ENCODE measurements at regions of chr15 and their contacts with region 1.

Region 1: DNA sequence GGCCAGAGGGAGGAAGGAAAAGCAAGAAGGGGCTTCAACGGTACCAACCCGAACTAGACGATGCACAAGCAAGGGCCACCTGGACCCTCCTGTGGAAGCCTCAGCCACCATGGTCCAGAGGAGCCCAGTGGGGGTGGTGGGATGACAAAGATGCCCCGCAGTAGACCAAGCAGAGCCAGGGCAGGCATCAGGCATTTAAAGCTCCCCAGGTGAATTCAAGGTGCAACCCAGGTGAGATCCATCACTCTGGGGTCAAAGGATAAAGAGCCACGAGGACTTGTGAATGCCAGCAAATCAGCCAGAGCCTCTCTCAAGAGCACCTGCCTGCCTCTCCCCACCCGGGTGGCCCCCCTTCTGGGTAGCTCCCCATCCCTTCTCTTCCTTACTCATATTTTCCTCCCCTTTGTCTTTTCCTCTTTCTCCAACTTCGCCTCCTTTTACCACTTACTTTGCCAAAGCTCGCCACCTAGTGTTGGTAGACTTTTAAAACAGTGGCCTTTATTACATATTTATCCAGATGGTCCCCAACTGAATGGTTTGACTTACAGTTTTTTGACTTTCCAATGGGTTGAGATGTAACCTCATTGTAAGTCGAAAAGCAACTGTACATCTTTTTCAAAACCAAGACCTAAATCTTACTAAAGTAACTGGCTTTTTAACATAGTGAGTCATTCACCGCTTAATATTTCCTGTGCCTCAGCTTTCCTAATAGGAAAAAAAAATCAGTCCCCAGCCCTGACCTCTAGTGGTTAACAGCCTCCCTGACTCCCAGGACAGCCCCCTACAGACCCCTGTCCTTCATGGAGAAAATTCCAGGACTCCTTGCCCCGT is 18.8 kb downstream of the PLA2G4F start:
- DNase-seq: peak; percentile 76
- H3K4me3 Mint-ChIP-seq: no peak overlapping the region
- H3K27ac Mint-ChIP-seq: no peak overlapping the region
- H3K4me1 Mint-ChIP-seq: peaks cover 5% of the 10 kb centered on the region
- H3K27me3 Mint-ChIP-seq: peaks cover 20% of the 10 kb centered on the region
- CTCF ChIP-seq: peak; percentile 66

Region 2: DNA sequence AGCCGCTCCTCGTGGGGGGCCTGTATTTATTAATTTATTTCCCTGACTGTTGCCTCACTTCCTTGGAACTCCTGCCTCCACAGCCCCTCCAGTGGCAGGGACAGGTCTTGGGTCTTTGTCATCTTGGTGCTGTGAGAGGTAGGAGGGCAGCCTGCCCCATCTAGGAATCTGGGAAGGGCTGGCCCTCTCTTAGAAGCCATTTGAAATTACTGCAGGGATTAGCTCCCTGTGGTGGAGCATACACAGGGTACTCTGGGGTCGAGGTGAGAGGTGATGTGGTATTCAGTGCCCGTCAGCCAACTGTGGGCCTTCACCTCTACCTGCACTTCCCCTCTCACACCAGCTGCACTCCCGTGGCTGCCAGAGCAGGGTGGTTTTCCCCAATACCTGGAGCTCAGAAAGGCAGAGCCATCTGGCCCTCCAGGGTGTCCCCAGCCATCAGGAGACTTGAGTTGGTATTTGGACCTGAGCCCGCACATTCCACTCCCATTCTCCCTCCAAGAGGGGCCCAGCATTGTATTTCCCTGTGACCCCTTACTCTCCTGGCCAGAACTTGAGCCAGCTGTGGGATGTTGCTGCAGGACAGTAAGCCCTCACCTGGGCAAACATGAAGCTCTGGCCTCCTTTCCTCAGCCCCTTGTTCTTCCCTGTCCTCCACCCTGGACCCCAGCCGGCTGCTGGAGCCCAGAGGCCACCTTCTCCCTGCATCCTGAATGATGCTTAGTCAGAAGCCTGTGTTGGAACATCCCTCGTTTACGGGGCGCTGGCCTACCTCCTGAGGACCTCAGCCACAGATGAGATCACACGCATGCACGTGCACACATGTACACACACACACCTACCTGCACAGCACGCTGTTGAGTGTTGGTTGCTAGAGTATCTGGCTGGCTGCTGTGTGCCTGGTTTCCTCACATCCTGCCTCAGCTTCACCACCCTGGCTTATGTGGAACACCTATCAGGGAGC is 311.8 kb before region 1 on chr15:
- CTCF ChIA-PET with region 1: no interaction called
- POLR2A ChIA-PET with region 1: no interaction called
- intact Hi-C with region 1: no loop called
- DNase-seq: no peak
- H3K4me3 Mint-ChIP-seq: no peak overlapping the region
- H3K27ac Mint-ChIP-seq: peak overlapping the region; percentile 9
- H3K4me1 Mint-ChIP-seq: peaks cover 6% of the 10 kb centered on the region
- H3K27me3 Mint-ChIP-seq: no peaks in the 10 kb centered on the region
- CTCF ChIP-seq: no peak

Region 3: GRCh38 chr15:42056934-42057779 is 80.5 kb before region 1 on chr15:
- CTCF ChIA-PET with region 1: interaction called, 11 read pairs
- POLR2A ChIA-PET with region 1: interaction called, 3 read pairs
- intact Hi-C with region 1: no loop called
- DNase-seq: peak; percentile 99
- H3K4me3 Mint-ChIP-seq: peak overlapping the region; percentile 69
- H3K27ac Mint-ChIP-seq: peak overlapping the region; percentile 95
- H3K4me1 Mint-ChIP-seq: peaks cover 13% of the 10 kb centered on the region
- H3K27me3 Mint-ChIP-seq: no peaks in the 10 kb centered on the region
- CTCF ChIP-seq: peak; percentile 59

Region 4: DNA sequence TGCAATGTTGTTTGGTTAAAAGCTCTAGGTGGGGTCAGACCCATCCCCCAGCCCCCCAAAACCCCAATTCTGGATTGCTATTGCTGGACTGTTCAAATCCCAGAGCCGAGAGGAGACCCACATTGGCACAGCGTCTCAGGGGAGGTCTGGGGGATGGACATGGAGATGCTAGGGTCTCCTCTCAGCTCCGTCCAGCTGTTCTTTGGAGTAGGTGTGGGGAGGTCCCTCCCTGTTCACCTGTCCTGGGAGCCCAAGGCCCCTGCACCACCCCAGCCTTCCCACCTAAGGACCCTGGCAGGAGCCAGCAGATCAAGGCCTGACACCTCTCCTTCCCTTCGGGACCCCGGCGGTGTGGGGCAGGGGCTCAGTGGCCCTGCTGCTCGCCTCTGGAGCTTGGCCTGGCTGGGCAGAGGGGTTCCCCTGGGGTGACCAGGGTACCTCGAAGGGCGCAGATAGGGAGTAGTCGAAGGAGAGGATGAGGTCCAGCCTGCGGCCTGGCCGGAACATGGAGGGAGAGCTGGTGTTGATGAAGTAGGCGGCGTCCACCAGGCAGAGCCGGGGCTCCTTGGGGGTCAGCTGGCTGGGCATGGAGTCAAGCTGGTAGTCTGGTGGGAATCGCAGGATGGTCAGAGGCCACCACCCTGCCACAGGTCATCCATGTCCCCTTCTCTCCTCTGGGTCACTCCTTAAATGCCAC is 67.2 kb before region 1 on chr15:
- CTCF ChIA-PET with region 1: interaction called, 122 read pairs
- POLR2A ChIA-PET with region 1: interaction called, 5 read pairs
- intact Hi-C with region 1: loop called (anchors 1 kb)
- DNase-seq: no peak
- H3K4me3 Mint-ChIP-seq: no peak overlapping the region
- H3K27ac Mint-ChIP-seq: no peak overlapping the region
- H3K4me1 Mint-ChIP-seq: peaks cover 8% of the 10 kb centered on the region
- H3K27me3 Mint-ChIP-seq: no peaks in the 10 kb centered on the region
- CTCF ChIP-seq: no peak

Region 5: DNA sequence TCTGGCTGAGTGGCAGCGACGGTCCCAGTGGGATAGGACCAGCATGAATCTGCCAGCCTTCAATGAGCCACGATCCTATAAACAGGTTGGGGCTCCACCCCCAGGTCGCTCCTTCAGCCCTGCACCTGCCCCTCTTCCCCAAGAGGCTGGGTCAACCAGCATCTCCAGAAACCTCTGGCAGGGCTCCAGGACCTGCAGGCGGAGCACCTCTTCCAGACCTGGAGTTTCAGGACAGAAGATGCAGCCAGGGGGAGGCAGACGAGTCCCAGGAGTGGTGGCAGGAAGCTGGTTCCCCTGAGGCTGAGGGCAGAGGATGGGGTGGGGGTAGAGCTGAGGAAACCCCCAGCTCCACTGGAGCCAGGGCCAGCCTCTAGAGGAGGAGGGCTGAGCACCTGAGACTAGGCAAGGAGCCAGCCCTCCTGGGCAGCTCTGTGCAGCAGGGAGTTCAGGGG is 43.1 kb before region 1 on chr15 and contains the start of gene PLA2G4D:
- CTCF ChIA-PET with region 1: interaction called, 53 read pairs
- POLR2A ChIA-PET with region 1: no interaction called
- intact Hi-C with region 1: no loop called
- DNase-seq: peak; percentile 58
- H3K4me3 Mint-ChIP-seq: no peak within 1 kb of the TSS
- H3K27ac Mint-ChIP-seq: no peak within 1 kb of the TSS
- H3K4me1 Mint-ChIP-seq: peaks cover 10% of the 10 kb centered on the region
- H3K27me3 Mint-ChIP-seq: no peaks in the 10 kb centered on the region
- CTCF ChIP-seq: no peak
- total RNA-seq, gene PLA2G4D: not detected in 2 replicates

Region 6: GRCh38 chr15:42313463-42313862 is 175.8 kb after region 1 on chr15:
- CTCF ChIA-PET with region 1: no interaction called
- POLR2A ChIA-PET with region 1: no interaction called
- intact Hi-C with region 1: no loop called
- DNase-seq: no peak
- H3K4me3 Mint-ChIP-seq: no peak overlapping the region
- H3K27ac Mint-ChIP-seq: no peak overlapping the region
- H3K4me1 Mint-ChIP-seq: no peaks in the 10 kb centered on the region
- H3K27me3 Mint-ChIP-seq: no peaks in the 10 kb centered on the region
- CTCF ChIP-seq: no peak

Region 7: GRCh38 chr15:42474827-42475226 is 337.2 kb after region 1 on chr15:
- CTCF ChIA-PET with region 1: interaction called, 5 read pairs
- POLR2A ChIA-PET with region 1: no interaction called
- intact Hi-C with region 1: loop called (anchors 5 kb)
- DNase-seq: no peak
- H3K4me3 Mint-ChIP-seq: no peak overlapping the region
- H3K27ac Mint-ChIP-seq: no peak overlapping the region
- H3K4me1 Mint-ChIP-seq: peaks cover 6% of the 10 kb centered on the region
- H3K27me3 Mint-ChIP-seq: no peaks in the 10 kb centered on the region
- CTCF ChIP-seq: no peak

Measured in MCF 10A (cell line).